CD14-positive monocyte (primary cell): ENCODE measurements at regions of chr3 and their contacts with region 1.

Region 1: GRCh38 chr3:49295489-49296058 is 18.5 kb upstream of the C3orf62 start:
- DNase-seq: peak; percentile 29 to 54 (median 44)
- H3K4me3 ChIP-seq: no peak overlapping the region
- H3K4me3 Mint-ChIP-seq: no peak overlapping the region
- H3K27ac ChIP-seq: no peak overlapping the region
- H3K27ac Mint-ChIP-seq: no peak overlapping the region
- H3K4me1 ChIP-seq: peaks cover 4 to 10% of the 10 kb centered on the region in 2 donors
- H3K4me1 Mint-ChIP-seq: peaks cover 10% of the 10 kb centered on the region
- H3K27me3 ChIP-seq: no peaks in the 10 kb centered on the region
- H3K27me3 Mint-ChIP-seq: peaks cover 0 to 2% (median 0%) of the 10 kb centered on the region in 3 donors
- CTCF ChIP-seq: peak; percentile 84

Region 2: DNA sequence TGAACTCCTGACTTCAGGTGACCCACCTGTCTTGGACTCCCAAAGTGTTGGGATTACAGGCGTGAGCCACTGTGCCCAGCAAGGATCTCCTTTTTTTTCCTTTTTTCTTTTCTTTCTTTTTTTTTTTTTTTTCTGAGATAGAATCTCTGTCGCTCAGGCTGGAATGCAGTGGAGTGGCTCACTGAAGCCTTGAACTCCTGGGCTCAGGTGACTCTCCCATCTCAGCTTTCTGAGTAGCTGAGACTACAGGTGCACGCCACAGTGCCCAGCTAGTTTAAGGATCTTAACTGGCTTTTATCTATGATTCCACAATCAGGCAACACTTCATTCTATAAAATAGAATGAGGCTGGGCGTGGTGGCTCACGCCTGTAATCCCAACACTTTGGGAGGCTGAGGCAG is 149.8 kb after region 1 on chr3:
- intact Hi-C with region 1: loop called in 1 of 2 experiments (anchors 5 kb)
- DNase-seq: no peak
- H3K4me3 ChIP-seq: peak overlapping the region in 1 of 3 experiments; percentile 20
- H3K4me3 Mint-ChIP-seq: no peak overlapping the region
- H3K27ac ChIP-seq: peak overlapping the region; percentile 79 to 83
- H3K27ac Mint-ChIP-seq: peak overlapping the region; percentile 87 to 95 (median 94)
- H3K4me1 ChIP-seq: peaks cover 42 to 43% of the 10 kb centered on the region in 2 donors
- H3K4me1 Mint-ChIP-seq: peaks cover 30% of the 10 kb centered on the region
- H3K27me3 ChIP-seq: no peaks in the 10 kb centered on the region
- H3K27me3 Mint-ChIP-seq: peaks cover 0 to 3% (median 0%) of the 10 kb centered on the region in 3 donors
- CTCF ChIP-seq: no peak

Region 3: GRCh38 chr3:49519296-49519695 is 223.7 kb after region 1 on chr3:
- intact Hi-C with region 1: no loop called
- DNase-seq: no peak
- H3K4me3 ChIP-seq: no peak overlapping the region
- H3K4me3 Mint-ChIP-seq: no peak overlapping the region
- H3K27ac ChIP-seq: no peak overlapping the region
- H3K27ac Mint-ChIP-seq: no peak overlapping the region
- H3K4me1 ChIP-seq: no peaks in the 10 kb centered on the region
- H3K4me1 Mint-ChIP-seq: peaks cover 18% of the 10 kb centered on the region
- H3K27me3 ChIP-seq: no peaks in the 10 kb centered on the region
- H3K27me3 Mint-ChIP-seq: no peaks in the 10 kb centered on the region
- CTCF ChIP-seq: no peak